ENCODE measurements at regions of chr13 and their contacts with region 1.

Region 1: DNA sequence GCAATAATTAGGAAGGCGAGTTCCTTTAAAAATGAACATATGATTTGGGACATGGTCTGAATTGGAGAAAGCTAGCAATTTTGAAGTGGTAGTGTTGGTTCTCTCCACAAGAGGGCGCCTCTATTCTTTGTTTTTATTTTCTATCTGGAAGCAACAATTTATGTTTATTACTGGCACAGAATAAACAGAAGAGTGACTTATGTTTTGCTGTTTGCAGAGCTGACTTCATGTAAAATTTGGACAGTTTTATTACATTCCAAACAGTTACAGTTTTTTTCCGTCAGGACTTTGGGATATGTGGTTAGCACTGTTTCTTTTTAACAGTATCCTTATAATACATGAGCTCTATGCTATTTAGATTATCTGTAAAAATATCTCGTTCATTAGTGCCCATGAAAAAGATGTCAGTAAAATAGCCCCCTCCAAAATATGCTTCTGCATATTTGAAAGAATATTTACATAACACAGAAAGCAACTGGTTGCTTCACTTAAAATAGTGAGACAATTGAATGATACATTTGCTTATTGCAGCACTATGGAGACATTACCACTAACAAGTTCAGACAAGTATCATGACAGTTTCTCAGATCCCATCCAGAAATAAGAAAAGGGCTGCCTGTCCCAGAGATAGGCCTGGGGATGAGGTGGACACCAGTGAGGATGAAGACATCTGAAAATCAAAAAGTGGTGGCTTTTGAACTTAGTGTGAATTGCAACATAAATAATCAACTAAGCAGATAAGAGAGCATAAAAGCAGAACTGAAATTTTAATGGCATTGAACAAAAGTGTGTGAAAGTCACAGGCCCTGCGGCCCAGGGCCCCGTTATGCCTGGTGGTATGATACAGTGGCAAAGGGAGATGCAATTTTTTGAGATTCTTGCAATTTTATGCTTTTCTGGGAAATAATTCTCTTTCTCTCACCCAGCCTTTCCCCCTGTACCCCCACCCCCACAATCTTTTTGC is 32.3 kb upstream of the FGF9 start:
- DNase-seq: no peak
- ATAC-seq: no peak
- H3K4me3 ChIP-seq: no peak overlapping the region
- H3K27ac ChIP-seq: no peak overlapping the region; the same call in 1 of the 2 replicates
- H3K4me1 ChIP-seq: peaks cover 17 to 20% of the 10 kb centered on the region in 2 experiments
- H3K27me3 ChIP-seq: no peaks in the 10 kb centered on the region
- CTCF ChIP-seq: peak; percentile 37 to 89 (median 60); a peak in 5 of 6 replicates
- POLR2A ChIP-seq: no peak
- RAD21 ChIP-seq: peak; percentile 62

Region 2: GRCh38 chr13:21616880-21617279 is 21.7 kb before region 1 on chr13:
- CTCF ChIA-PET with region 1: interaction called, 12 read pairs
- POLR2A ChIA-PET with region 1: no interaction called
- RAD21 ChIA-PET with region 1: no interaction called
- intact Hi-C with region 1: no loop called
- DNase-seq: no peak
- ATAC-seq: peak; percentile 61; the same call in 1 of the 2 replicates
- H3K4me3 ChIP-seq: peak overlapping the region; percentile 19; a peak in 3 of 4 replicates
- H3K27ac ChIP-seq: no peak overlapping the region
- H3K4me1 ChIP-seq: peaks cover 5 to 12% of the 10 kb centered on the region in 2 experiments
- H3K27me3 ChIP-seq: no peaks in the 10 kb centered on the region
- CTCF ChIP-seq: no peak
- POLR2A ChIP-seq: no peak
- RAD21 ChIP-seq: no peak

Region 3: DNA sequence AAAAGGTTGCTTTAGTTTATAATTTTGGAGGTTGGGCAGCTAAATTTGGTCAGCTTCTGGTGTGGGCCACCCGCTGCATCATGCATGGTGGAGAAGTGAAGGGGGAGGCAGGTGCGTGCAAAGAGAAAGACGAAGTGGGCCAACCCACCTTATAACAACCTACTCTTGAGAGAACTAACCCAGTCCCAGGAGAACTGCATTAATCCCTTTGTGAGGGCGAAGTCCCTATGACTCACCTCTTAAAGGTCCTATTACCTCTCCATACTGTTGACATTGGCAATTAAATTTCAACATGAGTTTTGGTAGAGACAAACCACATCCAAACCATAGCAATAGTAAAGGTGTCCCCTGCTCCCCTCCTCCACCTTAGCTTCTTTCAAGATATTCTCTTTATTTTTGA is 24.6 kb after region 1 on chr13:
- CTCF ChIA-PET with region 1: interaction called, 10 read pairs
- POLR2A ChIA-PET with region 1: no interaction called
- RAD21 ChIA-PET with region 1: no interaction called
- intact Hi-C with region 1: no loop called
- DNase-seq: no peak
- ATAC-seq: peak; percentile 74
- H3K4me3 ChIP-seq: no peak overlapping the region
- H3K27ac ChIP-seq: no peak overlapping the region
- H3K4me1 ChIP-seq: peaks cover 4 to 8% of the 10 kb centered on the region in 2 experiments; a peak in 3 of 4 replicates
- H3K27me3 ChIP-seq: no peaks in the 10 kb centered on the region
- CTCF ChIP-seq: no peak
- POLR2A ChIP-seq: no peak
- RAD21 ChIP-seq: no peak

Region 4: DNA sequence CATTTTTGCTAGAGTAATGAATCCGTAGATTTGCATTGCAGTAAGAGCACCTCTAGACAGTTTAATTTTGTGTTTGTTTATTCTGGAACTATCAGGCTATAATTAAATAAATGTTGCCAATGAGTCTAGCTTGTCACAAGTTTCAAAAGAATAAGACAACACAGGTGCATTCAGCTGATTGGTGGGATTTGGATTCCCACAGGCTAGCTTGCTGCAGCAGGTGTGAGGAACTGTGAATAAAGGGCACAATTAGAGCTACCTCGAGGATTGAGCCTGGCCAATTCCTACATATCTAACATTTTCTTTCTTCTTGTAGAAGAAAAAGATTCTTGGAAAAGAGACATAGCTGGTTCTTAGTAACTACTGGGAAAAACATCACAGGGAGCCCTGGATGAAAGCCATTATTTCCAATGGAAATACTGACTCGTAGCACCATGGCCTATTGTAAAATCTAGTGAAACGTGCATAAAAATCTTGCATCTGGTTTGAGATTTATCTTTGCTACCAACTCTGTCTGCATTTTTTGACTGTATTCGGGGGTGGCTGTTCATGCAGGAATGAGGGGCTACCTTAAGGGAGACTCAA is 393.2 kb after region 1 on chr13:
- CTCF ChIA-PET with region 1: no interaction called
- POLR2A ChIA-PET with region 1: no interaction called
- RAD21 ChIA-PET with region 1: no interaction called
- intact Hi-C with region 1: loop called (anchors 10 kb)
- DNase-seq: no peak
- ATAC-seq: no peak
- H3K4me3 ChIP-seq: no peak overlapping the region
- H3K27ac ChIP-seq: no peak overlapping the region
- H3K4me1 ChIP-seq: no peaks in the 10 kb centered on the region
- H3K27me3 ChIP-seq: no peaks in the 10 kb centered on the region
- CTCF ChIP-seq: no peak
- POLR2A ChIP-seq: no peak
- RAD21 ChIP-seq: no peak

Region 5: GRCh38 chr13:22278336-22278929 is 639.8 kb after region 1 on chr13:
- CTCF ChIA-PET with region 1: interaction called, 6 read pairs
- POLR2A ChIA-PET with region 1: no interaction called
- RAD21 ChIA-PET with region 1: no interaction called
- intact Hi-C with region 1: loop called (anchors 2 kb)
- DNase-seq: peak; percentile 34
- ATAC-seq: peak; percentile 78
- H3K4me3 ChIP-seq: no peak overlapping the region
- H3K27ac ChIP-seq: no peak overlapping the region
- H3K4me1 ChIP-seq: no peaks in the 10 kb centered on the region
- H3K27me3 ChIP-seq: no peaks in the 10 kb centered on the region
- CTCF ChIP-seq: peak; percentile 31 to 54 (median 43); a peak in 4 of 6 replicates
- POLR2A ChIP-seq: no peak
- RAD21 ChIP-seq: peak; percentile 56

Region 6: DNA sequence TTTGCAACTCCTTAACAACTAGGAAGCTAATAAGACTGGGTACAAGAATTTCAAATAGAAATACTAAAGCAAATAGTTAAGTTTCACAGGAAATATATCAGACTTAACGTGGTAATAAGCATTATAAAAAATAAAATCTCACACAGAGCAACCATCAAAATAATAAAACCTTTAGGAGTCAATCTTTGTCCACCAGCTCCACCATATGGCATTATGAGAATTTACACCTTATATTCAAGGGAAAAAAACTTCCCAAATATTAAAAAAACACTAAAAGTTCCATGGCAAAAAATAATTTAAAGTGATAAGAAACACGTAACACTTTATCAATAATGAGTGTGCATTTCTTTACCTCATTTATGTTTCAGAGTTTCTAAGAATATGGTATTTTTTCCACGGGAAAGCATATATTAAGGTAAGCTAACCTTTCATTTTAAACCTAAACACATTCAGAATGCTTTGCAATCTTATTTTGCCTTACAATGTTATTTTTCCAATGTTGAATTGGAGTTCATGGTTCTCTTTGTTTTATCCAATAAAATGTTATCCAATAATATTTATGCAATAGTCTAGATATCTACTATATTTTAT is 1119.0 kb after region 1 on chr13:
- CTCF ChIA-PET with region 1: interaction called, 14 read pairs
- POLR2A ChIA-PET with region 1: no interaction called
- RAD21 ChIA-PET with region 1: no interaction called
- intact Hi-C with region 1: loop called (anchors 5 kb)
- DNase-seq: no peak
- ATAC-seq: 0 out of 2 replicates have a peak, but pooled peaks have one; percentile 53
- H3K4me3 ChIP-seq: no peak overlapping the region
- H3K27ac ChIP-seq: no peak overlapping the region
- H3K4me1 ChIP-seq: no peaks in the 10 kb centered on the region
- H3K27me3 ChIP-seq: no peaks in the 10 kb centered on the region
- CTCF ChIP-seq: peak; percentile 32 to 64 (median 34); a peak in 4 of 6 replicates
- POLR2A ChIP-seq: no peak
- RAD21 ChIP-seq: peak; percentile 57

Region 7: GRCh38 chr13:22801402-22802003 is 1162.9 kb after region 1 on chr13:
- CTCF ChIA-PET with region 1: interaction called, 13 read pairs
- POLR2A ChIA-PET with region 1: interaction called, 3 read pairs
- RAD21 ChIA-PET with region 1: interaction called in 1 of 2 experiments, 4 read pairs
- intact Hi-C with region 1: no loop called
- DNase-seq: no peak
- ATAC-seq: no peak
- H3K4me3 ChIP-seq: no peak overlapping the region
- H3K27ac ChIP-seq: no peak overlapping the region
- H3K4me1 ChIP-seq: no peaks in the 10 kb centered on the region
- H3K27me3 ChIP-seq: no peaks in the 10 kb centered on the region
- CTCF ChIP-seq: peak in 2 of 3 experiments; percentile 16 to 39; a peak in 3 of 6 replicates
- POLR2A ChIP-seq: no peak
- RAD21 ChIP-seq: peak; percentile 54

Measured in HCT116 (cell line).